ENCODE measurements at regions of chr2 and their contacts with region 1.

Region 1: GRCh38 chr2:207746131-207746530 is 23.6 kb downstream of the FZD5 start:
- DNase-seq: peak; percentile 74
- H3K4me3 Mint-ChIP-seq: no peak overlapping the region
- H3K27ac Mint-ChIP-seq: no peak overlapping the region
- H3K4me1 Mint-ChIP-seq: no peaks in the 10 kb centered on the region
- H3K27me3 Mint-ChIP-seq: no peaks in the 10 kb centered on the region
- CTCF ChIP-seq: peak; percentile 89

Region 2: DNA sequence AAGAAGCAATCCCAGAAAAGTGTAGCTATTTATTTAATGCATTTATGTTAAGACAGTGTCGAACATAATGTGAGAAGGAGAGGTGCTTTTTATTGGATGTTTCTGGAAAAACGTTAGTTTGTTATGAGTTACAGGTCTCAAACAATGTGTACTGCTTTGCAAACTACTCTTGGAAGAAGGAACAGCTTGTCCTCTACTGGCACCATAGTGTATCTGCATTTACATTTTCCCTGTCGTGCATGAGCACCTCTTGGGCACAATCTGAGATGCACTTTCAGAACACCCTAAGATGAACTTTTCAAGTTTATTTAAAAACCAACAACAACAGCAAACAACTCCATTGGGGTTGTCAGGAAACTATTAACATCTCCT is 11.9 kb before region 1 on chr2:
- CTCF ChIA-PET with region 1: interaction called, 26 read pairs
- POLR2A ChIA-PET with region 1: no interaction called
- intact Hi-C with region 1: no loop called
- DNase-seq: peak; percentile 43
- H3K4me3 Mint-ChIP-seq: no peak overlapping the region
- H3K27ac Mint-ChIP-seq: no peak overlapping the region
- H3K4me1 Mint-ChIP-seq: peaks cover 5% of the 10 kb centered on the region
- H3K27me3 Mint-ChIP-seq: no peaks in the 10 kb centered on the region
- CTCF ChIP-seq: peak; percentile 26

Region 3: GRCh38 chr2:207769597-207770486 is 23.7 kb after region 1 on chr2 and contains the start of gene FZD5:
- CTCF ChIA-PET with region 1: interaction called, 12 read pairs
- POLR2A ChIA-PET with region 1: interaction called, 3 read pairs
- intact Hi-C with region 1: no loop called
- DNase-seq: peak; percentile 95
- H3K4me3 Mint-ChIP-seq: peak within 1 kb of the TSS; percentile 86
- H3K27ac Mint-ChIP-seq: peak within 1 kb of the TSS; percentile 42
- H3K4me1 Mint-ChIP-seq: peaks cover 8% of the 10 kb centered on the region
- H3K27me3 Mint-ChIP-seq: no peaks in the 10 kb centered on the region
- CTCF ChIP-seq: peak; percentile 68
- total RNA-seq, gene FZD5: 2.6 and 4.3 TPM in 2 replicates

Region 4: DNA sequence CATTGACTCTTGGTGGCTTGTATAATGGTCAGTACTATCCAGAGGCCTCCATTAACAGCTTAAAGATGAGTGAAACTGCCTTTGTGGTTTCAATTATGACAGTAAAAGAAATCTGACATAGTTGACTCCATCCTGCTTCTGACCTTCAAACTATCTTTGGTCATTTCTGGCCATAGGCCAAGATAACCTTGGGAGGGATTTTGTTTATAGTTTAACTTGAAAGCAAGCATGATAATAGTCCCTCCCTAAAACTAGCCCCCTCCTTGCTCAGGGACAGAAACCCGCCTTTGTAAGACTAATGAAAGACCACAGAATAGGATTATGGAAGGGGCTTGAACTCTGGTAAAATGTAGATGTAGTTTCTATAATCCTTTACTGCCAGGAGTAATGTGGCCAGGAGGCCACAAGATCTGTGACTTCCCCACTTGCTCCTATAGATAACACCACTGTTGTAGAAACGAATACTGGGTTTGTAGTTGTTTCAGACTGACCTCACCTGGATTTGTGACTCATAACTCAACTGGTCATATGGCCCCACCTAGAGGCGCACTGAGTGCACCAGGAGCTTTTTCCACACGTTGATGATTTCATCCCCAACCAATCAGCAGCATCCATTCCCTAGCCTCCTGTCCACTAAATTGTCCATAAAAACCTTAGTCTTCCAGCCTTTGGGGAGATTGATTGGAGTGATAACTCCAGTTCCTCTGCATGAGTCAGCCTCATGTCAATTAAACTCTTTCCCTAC is 287.8 kb after region 1 on chr2:
- CTCF ChIA-PET with region 1: interaction called, 193 read pairs
- POLR2A ChIA-PET with region 1: no interaction called
- intact Hi-C with region 1: loop called (anchors 1 kb)
- DNase-seq: peak; percentile 82
- H3K4me3 Mint-ChIP-seq: no peak overlapping the region
- H3K27ac Mint-ChIP-seq: no peak overlapping the region
- H3K4me1 Mint-ChIP-seq: no peaks in the 10 kb centered on the region
- H3K27me3 Mint-ChIP-seq: no peaks in the 10 kb centered on the region
- CTCF ChIP-seq: peak; percentile 24

Region 5: GRCh38 chr2:208072250-208072892 is 326.2 kb after region 1 on chr2:
- CTCF ChIA-PET with region 1: interaction called, 159 read pairs
- POLR2A ChIA-PET with region 1: interaction called, 3 read pairs
- intact Hi-C with region 1: loop called (anchors 1 kb)
- DNase-seq: peak; percentile 75
- H3K4me3 Mint-ChIP-seq: no peak overlapping the region
- H3K27ac Mint-ChIP-seq: no peak overlapping the region
- H3K4me1 Mint-ChIP-seq: no peaks in the 10 kb centered on the region
- H3K27me3 Mint-ChIP-seq: no peaks in the 10 kb centered on the region
- CTCF ChIP-seq: peak; percentile 68